Posterior cingulate gyrus (tissue), 11 donors: ENCODE measurements at regions of chr3 and their contacts with region 1.

Region 1: DNA sequence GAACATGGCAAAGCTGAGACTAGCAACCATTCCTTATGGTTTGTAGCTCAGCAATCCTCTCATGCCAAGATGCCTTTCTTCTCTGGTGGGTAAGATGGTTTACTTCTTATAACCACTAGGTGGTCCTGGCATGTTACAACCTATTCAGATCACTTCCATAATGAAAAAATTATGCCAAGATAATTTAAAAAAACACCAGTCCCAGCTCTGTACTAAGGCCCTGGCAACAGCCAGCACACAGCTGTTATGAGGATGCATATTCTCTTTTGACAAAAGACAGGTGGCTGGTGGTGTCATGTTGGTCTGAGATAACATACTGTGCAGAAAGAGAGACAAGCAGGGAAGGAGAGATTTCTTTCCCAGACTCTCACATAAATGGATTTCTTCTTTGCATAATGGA is 65.7 kb upstream of the FRMD4B start:
- DNase-seq: no peak

Region 2: DNA sequence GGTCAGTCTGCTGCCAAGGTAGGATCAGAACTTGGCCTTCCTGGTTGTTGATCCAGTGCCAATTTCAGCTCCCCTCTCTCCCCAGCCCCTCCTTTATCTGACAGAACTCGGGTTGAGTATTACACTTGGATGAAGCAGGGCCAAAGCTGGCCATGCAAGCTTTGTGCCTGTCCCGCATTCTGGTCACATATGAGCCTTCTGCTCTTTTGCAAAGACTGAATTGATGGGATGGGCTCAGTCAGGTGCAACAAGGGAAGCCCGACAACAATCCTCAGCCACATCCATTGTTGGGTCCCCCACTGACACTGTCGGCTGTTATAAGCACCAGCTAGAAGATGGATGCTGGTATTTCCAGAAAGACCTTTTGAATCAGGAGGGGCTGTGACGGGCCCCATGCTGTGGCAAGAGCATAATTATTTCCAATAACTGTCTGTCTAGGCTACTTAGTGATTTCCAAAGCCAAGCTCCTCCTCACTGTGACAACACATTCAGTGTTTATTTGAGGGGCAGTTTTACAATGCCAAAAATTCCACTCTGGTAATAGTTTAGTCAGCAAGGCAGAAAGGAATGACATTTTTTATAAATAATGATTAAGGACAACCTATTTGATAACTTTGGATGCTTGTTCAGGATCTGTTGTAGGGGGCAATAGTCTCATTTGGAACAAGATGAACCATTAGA is 81.1 kb after region 1 on chr3:
- intact Hi-C with region 1: loop called (anchors 10 kb)
- DNase-seq: no peak

Region 3: DNA sequence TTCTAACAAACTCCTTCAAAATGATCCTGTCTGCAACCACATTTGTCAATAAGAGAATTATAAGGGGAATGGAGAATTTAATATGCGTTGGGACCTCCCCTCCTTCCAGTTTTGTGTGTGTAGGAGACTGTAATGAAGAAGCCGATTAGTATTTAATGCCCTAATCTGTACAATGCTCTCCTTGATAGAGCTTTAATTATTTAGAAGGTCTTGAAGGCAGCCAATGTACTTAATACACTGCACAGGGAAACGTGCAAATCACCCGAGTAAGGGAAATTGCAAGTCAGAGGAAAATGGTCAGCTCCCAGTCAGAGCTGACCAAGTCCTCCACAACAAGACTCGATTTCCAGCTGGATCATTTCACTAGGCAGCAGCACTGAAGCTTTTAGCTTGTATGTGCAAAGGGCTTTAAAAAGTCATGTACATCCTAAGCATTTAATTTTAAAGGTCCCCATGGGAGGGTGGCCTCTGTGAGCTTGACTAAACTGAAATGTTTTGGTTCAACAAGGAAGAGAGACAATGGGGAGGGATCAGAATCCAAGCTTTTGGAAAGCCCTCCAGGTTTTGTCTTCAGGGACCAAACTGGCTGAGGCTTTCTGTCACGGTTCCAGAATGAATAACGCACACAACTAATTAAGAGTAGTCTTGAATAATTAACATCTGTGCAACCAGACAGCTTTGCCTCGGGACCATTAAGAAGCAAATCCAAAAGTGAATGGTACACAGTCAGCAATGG is 127.9 kb after region 1 on chr3:
- intact Hi-C with region 1: no loop called
- DNase-seq: no peak

Region 4: DNA sequence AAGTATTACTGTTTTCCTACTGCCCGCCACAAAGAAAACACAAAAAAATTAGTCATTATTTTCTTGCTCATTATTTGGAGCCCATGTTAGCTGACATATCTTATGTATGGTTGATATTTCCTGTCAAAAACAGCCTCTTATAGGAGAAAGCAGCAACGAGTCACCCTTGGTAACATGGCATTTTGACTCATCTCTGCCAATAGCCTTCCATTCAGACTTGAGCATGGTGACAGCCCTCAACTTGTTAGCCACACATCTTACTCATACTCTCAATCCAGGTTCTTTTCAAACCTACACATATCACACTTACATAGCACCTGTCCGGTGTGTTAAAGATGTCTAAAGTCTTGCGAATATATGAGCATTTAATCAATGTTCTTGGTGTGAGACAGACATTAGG is 438.5 kb after region 1 on chr3:
- intact Hi-C with region 1: no loop called
- DNase-seq: no peak